PC-9 (cell line): ENCODE measurements at regions of chr20 and their contacts with region 1.

Region 1: DNA sequence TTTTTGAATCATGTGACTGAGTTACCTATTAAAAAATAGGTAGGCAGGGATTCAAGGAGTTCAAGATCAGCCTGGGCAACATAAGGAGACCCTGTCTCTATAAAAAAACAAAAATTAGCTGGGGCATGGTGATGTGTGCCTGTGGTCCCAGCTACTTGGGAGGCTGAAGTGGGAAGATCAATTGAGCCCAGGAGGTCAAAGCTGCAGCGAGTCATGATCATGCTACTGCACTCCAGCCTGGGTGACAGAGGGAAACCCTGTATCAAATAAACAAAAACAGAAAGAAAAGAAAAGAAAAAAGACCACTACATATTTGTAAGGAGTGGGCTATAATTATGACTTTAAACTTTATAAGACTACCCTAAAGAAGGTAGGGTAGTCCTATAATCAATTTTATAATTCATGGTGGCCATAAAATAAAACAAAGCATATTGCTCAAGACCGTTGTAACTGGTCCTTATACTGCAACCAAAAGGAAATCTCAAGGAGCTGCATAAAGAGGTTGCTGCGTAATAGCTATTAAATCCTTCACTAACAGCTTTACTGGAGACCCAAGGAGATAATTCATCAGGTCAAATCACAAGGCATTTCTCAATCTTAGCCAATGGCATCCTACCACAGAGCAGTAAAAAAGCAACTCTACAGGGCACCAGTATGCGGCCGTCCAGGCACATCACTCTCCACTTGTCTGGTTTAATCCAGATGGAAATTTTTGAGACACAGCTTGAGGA is 13.5 kb downstream of the PIGU start:
- DNase-seq: no peak
- H3K4me3 ChIP-seq: no peak overlapping the region
- H3K27ac ChIP-seq: no peak overlapping the region
- H3K4me1 ChIP-seq: 0 out of 2 replicates have a peak, but pooled peaks cover 5% of the 10 kb centered on the region
- H3K27me3 ChIP-seq: no peaks in the 10 kb centered on the region
- CTCF ChIP-seq: no peak

Region 2: DNA sequence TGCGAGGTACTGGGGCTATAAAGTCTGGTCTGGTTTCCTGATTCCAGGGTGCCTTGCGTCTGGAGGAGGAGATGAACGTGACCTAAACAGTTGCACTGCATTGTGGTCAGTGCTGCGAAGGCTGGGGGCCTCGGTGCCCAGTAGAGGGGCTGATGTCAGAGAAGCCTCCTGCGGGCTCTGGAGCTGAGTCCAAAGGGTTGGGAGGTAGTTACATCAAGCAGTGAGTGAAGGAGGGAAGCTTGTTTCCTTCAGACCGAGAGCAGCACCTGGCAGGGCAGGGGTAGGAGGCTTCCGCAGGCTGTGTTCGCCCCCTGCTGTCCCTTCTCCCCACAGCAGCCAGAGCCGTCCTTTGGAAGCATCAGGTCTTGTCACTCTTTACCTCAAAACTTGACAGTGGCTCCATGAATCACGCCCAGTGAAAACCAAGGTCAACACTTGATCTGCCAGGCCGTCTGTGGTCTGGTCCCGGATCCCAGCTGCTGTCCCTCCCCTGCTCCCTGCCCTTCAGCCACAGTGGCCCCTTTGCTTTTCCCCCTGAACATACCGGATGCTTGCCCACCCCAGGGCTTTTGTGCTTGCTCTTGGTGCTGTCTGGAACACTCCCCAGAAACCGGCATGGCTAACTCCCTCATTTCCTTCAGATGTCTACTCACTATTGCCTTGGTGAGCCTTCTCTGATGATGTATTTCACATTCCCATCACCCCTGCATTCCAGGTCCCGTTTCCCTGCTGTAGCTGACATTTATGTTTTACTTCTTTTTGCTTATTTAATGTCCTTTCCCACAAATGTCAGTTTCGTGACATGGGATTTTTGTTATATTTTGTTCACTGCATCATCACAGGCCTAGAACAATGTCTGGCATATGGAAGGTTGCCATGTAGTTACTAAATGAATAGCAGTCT is 140.2 kb before region 1 on chr20:
- CTCF ChIA-PET with region 1: interaction called, 13 read pairs
- POLR2A ChIA-PET with region 1: no interaction called
- intact Hi-C with region 1: no loop called
- DNase-seq: peak; percentile 44 to 55
- H3K4me3 ChIP-seq: no peak overlapping the region
- H3K27ac ChIP-seq: no peak overlapping the region
- H3K4me1 ChIP-seq: peaks cover 37% of the 10 kb centered on the region
- H3K27me3 ChIP-seq: no peaks in the 10 kb centered on the region
- CTCF ChIP-seq: peak; percentile 57

Region 3: GRCh38 chr20:34570859-34571306 is 92.5 kb before region 1 on chr20:
- CTCF ChIA-PET with region 1: no interaction called
- POLR2A ChIA-PET with region 1: no interaction called
- intact Hi-C with region 1: no loop called
- DNase-seq: no peak
- H3K4me3 ChIP-seq: no peak overlapping the region
- H3K27ac ChIP-seq: no peak overlapping the region
- H3K4me1 ChIP-seq: no peaks in the 10 kb centered on the region
- H3K27me3 ChIP-seq: no peaks in the 10 kb centered on the region
- CTCF ChIP-seq: no peak

Region 4: DNA sequence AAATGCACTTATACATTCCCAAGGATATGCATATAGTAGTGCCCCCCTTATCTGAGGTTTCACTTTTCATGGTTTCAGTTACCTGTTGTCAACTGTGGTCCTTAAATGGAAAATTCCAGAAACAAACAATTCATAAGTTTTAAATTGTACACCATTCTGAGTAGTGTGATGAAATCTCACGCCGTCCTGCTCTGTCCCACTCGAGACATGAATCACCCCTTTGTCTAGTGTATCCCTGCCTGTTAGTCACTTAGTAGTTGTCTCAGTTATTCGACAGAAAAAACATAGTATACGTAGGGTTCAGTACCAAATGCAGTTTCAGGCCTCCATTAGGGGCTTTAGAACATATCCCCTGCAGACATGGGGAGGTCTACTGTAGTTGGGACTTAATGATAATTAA is 47.9 kb before region 1 on chr20:
- CTCF ChIA-PET with region 1: no interaction called
- POLR2A ChIA-PET with region 1: no interaction called
- intact Hi-C with region 1: no loop called
- DNase-seq: no peak
- H3K4me3 ChIP-seq: no peak overlapping the region
- H3K27ac ChIP-seq: no peak overlapping the region
- H3K4me1 ChIP-seq: no peaks in the 10 kb centered on the region
- H3K27me3 ChIP-seq: no peaks in the 10 kb centered on the region
- CTCF ChIP-seq: no peak

Region 5: GRCh38 chr20:34626992-34627391 is 36.4 kb before region 1 on chr20:
- CTCF ChIA-PET with region 1: interaction called, 11 read pairs
- POLR2A ChIA-PET with region 1: no interaction called
- intact Hi-C with region 1: no loop called
- DNase-seq: no peak
- H3K4me3 ChIP-seq: no peak overlapping the region
- H3K27ac ChIP-seq: no peak overlapping the region
- H3K4me1 ChIP-seq: peaks cover 14% of the 10 kb centered on the region
- H3K27me3 ChIP-seq: no peaks in the 10 kb centered on the region
- CTCF ChIP-seq: no peak

Region 6: DNA sequence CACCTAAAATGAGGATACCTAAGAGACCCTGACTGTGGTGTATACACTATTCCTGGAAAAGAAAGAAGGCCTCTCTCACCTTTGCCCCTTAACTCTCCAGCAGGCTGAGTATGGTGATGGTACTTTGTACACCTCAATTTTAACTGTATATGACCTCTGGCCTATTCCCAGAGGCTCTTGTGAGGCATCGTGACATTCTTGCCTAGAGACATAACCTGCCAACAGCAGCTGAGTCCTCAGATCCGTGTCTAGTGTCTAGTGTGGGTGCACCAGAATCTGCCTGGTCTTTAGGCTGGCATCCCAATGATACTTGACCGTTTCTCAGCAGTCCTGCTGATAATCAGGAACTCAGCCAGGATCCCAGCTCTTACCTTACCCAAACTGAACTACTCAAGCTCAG is 60.8 kb after region 1 on chr20:
- CTCF ChIA-PET with region 1: interaction called, 12 read pairs
- POLR2A ChIA-PET with region 1: no interaction called
- intact Hi-C with region 1: no loop called
- DNase-seq: no peak
- H3K4me3 ChIP-seq: no peak overlapping the region
- H3K27ac ChIP-seq: no peak overlapping the region
- H3K4me1 ChIP-seq: no peaks in the 10 kb centered on the region
- H3K27me3 ChIP-seq: no peaks in the 10 kb centered on the region
- CTCF ChIP-seq: no peak

Region 7: DNA sequence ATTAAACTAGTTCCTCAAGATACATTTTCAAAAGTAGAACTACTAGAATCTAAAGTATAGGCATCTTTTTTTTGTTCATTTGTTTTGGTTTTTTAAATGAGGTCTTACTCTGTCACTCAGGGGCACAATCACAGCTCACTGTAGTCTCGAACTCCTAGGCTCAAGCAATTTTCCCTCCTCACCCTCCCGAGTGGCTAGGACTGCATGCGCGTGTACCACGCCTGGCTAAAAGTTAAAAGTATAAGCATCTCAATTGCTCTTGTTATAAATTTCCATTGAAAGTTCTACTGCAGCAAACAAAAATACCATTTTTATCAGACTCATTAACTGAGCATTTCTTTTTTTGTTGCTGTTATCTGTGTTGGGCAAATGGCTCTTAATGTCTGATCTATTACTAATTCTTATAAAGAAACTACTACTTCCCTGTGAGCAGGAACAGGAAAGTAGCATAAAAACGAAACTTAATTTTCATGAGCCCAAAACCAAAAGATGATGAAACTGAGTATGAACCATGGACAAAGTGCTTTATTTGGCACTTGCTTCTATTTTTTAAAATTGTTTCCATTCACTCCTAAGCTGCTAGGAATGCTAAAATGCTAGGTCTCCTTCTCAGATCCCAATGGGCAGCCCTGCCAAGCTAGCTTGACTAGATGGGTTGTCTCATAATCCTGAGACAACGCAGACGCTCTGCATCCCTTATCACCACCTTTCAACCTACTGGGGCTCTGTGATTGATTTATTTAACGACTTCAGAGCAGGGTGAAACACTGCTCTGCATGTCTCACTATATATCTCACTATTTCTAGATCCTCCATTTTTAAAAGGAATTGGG is 392.3 kb after region 1 on chr20:
- CTCF ChIA-PET with region 1: no interaction called
- POLR2A ChIA-PET with region 1: interaction called, 24 read pairs
- intact Hi-C with region 1: no loop called
- DNase-seq: no peak
- H3K4me3 ChIP-seq: no peak overlapping the region
- H3K27ac ChIP-seq: 0 out of 2 replicates have a peak overlapping the region, but pooled peaks have one; percentile 12
- H3K4me1 ChIP-seq: no peaks in the 10 kb centered on the region
- H3K27me3 ChIP-seq: no peaks in the 10 kb centered on the region
- CTCF ChIP-seq: no peak